ENCODE measurements at regions of chr5 and their contacts with region 1.

Region 1: GRCh38 chr5:55037046-55037771 is 13.2 kb downstream of the GZMK start:
- DNase-seq: peak; percentile 13 to 85 (median 56)
- ATAC-seq: peak; percentile 85
- H3K4me3 ChIP-seq: no peak overlapping the region
- H3K4me3 Mint-ChIP-seq: peak overlapping the region; percentile 50
- H3K27ac ChIP-seq: peak overlapping the region; percentile 16 to 72
- H3K27ac Mint-ChIP-seq: peak overlapping the region; percentile 93
- H3K4me1 ChIP-seq: peaks cover 22% of the 10 kb centered on the region
- H3K4me1 Mint-ChIP-seq: peaks cover 31% of the 10 kb centered on the region
- H3K27me3 ChIP-seq: no peaks in the 10 kb centered on the region
- H3K27me3 Mint-ChIP-seq: no peaks in the 10 kb centered on the region
- CTCF ChIP-seq: no peak

Region 2: DNA sequence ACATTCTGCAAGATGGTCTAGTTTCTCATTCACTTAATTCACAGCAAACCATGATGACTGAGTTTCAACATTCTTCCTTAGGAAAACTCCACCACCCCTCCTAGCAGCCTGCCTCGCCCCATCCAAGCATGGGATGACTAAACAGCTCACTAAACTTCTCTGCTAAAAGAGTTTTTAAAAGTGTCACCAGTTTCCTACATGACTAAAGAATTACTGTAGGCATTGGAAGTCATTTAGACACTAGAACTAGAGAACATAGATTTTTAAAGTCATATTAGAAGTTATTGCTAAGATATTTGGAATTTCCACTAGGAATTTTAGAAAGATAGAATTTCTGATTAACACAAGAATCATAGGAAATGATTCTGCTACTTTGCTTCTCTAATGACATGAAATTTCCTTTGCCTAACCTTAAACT is 46.4 kb before region 1 on chr5:
- CTCF ChIA-PET with region 1: interaction called, 4 read pairs
- POLR2A ChIA-PET with region 1: interaction called, 5 read pairs
- intact Hi-C with region 1: loop called in 1 of 2 experiments (anchors 5 kb)
- DNase-seq: no peak
- ATAC-seq: no peak
- H3K4me3 ChIP-seq: no peak overlapping the region
- H3K4me3 Mint-ChIP-seq: no peak overlapping the region
- H3K27ac ChIP-seq: no peak overlapping the region
- H3K27ac Mint-ChIP-seq: no peak overlapping the region
- H3K4me1 ChIP-seq: peaks cover 26% of the 10 kb centered on the region
- H3K4me1 Mint-ChIP-seq: peaks cover 50% of the 10 kb centered on the region
- H3K27me3 ChIP-seq: no peaks in the 10 kb centered on the region
- H3K27me3 Mint-ChIP-seq: no peaks in the 10 kb centered on the region
- CTCF ChIP-seq: no peak

Region 3: GRCh38 chr5:55021410-55021809 is 15.8 kb before region 1 on chr5:
- CTCF ChIA-PET with region 1: interaction called, 14 read pairs
- POLR2A ChIA-PET with region 1: interaction called, 24 read pairs
- intact Hi-C with region 1: no loop called
- DNase-seq: peak in 2 of 9 experiments; percentile 48 to 60
- ATAC-seq: peak; percentile 34
- H3K4me3 ChIP-seq: peak overlapping the region in 1 of 2 experiments; percentile 20
- H3K4me3 Mint-ChIP-seq: peak overlapping the region; percentile 35
- H3K27ac ChIP-seq: peak overlapping the region in 1 of 2 experiments; percentile 55
- H3K27ac Mint-ChIP-seq: peak overlapping the region; percentile 68
- H3K4me1 ChIP-seq: peaks cover 23% of the 10 kb centered on the region
- H3K4me1 Mint-ChIP-seq: peaks cover 47% of the 10 kb centered on the region
- H3K27me3 ChIP-seq: no peaks in the 10 kb centered on the region
- H3K27me3 Mint-ChIP-seq: no peaks in the 10 kb centered on the region
- CTCF ChIP-seq: no peak

Region 4: DNA sequence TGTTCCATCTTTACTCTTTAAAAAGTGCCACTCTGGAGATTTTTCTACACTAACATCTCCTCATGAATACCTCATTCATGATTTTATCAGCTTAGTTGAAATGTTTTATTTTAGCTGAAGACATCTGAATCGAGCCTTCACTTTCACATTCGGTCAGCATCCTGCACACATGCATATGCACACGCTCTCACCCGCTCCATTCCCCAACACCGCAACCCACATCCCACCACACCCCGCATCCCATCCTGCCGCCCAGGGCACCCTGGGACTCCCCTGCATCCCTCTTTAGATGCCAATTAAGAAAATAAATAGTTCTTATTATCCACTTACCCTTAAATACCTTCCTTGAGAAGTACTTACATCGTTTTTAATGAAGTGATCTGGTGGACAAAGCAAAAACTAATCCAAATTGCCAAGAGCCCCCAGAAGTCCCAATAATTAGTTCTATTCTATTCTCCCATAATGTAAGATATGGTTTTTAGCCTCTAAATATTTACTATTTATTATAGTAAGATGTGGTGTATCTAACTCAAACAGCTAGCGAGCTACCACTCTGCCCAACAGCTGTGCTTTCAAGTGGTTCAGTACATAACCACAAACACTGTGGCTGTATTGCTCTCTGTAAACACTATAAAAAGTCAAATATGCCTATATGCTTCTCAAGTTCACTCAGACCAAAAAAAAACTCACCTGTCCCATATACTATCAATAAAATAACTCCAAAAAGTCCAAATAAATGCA is 25.0 kb after region 1 on chr5:
- CTCF ChIA-PET with region 1: interaction called, 9 read pairs
- POLR2A ChIA-PET with region 1: interaction called, 9 read pairs
- intact Hi-C with region 1: loop called in 1 of 2 experiments (anchors 2 kb)
- DNase-seq: peak in 8 of 9 experiments; percentile 16 to 76 (median 49)
- ATAC-seq: peak; percentile 76
- H3K4me3 ChIP-seq: peak overlapping the region; percentile 30 to 44
- H3K4me3 Mint-ChIP-seq: peak overlapping the region; percentile 81
- H3K27ac ChIP-seq: peak overlapping the region; percentile 19 to 66
- H3K27ac Mint-ChIP-seq: peak overlapping the region; percentile 85
- H3K4me1 ChIP-seq: peaks cover 45% of the 10 kb centered on the region
- H3K4me1 Mint-ChIP-seq: peaks cover 57% of the 10 kb centered on the region
- H3K27me3 ChIP-seq: no peaks in the 10 kb centered on the region
- H3K27me3 Mint-ChIP-seq: no peaks in the 10 kb centered on the region
- CTCF ChIP-seq: no peak

Region 5: DNA sequence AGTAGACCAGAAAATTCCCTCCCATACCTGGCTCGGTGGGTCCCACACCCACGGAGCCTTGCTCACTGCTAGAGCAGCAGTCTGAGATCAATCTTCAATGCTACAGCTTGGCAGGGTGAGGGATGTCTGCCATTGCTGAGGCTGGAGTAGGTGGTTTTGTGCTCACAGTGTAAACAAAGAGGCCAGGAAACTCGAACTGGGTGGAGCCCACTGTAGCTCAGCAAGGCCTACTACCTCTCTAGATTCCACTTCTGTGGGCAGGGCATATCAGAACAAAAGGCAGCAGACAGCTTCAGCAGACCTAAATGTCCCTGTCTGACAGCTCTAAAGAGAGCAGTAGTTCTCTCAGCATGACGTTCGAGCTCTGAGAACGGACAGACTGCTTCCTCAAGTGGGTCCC is 59.7 kb after region 1 on chr5:
- CTCF ChIA-PET with region 1: interaction called, 9 read pairs
- POLR2A ChIA-PET with region 1: interaction called, 14 read pairs
- intact Hi-C with region 1: loop called in 1 of 2 experiments (anchors 2 kb)
- DNase-seq: peak; percentile 13 to 81 (median 60)
- ATAC-seq: peak; percentile 85
- H3K4me3 ChIP-seq: peak overlapping the region in 1 of 2 experiments; percentile 17
- H3K4me3 Mint-ChIP-seq: peak overlapping the region; percentile 57
- H3K27ac ChIP-seq: peak overlapping the region; percentile 48 to 79
- H3K27ac Mint-ChIP-seq: peak overlapping the region; percentile 92
- H3K4me1 ChIP-seq: peaks cover 61% of the 10 kb centered on the region
- H3K4me1 Mint-ChIP-seq: peaks cover 86% of the 10 kb centered on the region
- H3K27me3 ChIP-seq: no peaks in the 10 kb centered on the region
- H3K27me3 Mint-ChIP-seq: no peaks in the 10 kb centered on the region
- CTCF ChIP-seq: no peak

Region 6: DNA sequence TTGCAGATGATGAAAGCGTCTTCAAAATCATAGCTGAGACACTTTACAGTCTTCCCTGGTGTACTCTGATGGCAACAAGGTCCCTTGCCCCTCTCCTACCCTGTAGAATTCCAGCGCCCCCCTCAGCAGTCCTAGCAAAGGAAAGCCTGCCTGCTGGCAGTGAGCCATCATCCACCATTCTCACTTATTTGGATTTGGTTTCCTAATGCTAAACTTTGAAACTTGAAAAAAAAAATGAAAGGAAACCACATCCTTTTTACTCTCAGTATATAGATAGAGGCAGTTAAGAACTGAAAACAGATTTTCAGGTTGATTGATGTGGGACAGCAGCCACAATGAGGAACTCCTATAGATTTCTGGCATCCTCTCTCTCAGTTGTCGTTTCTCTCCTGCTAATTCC is 65.1 kb after region 1 on chr5 and contains the start of gene GZMA:
- CTCF ChIA-PET with region 1: interaction called, 9 read pairs
- POLR2A ChIA-PET with region 1: interaction called, 14 read pairs
- intact Hi-C with region 1: loop called in 1 of 2 experiments (anchors 2 kb)
- DNase-seq: peak in 7 of 9 experiments; percentile 12 to 83 (median 56)
- ATAC-seq: peak; percentile 72
- H3K4me3 ChIP-seq: peak within 1 kb of the TSS; percentile 41 to 78
- H3K4me3 Mint-ChIP-seq: peak within 1 kb of the TSS; percentile 80
- H3K27ac ChIP-seq: peak within 1 kb of the TSS; percentile 39 to 70
- H3K27ac Mint-ChIP-seq: peak within 1 kb of the TSS; percentile 86
- H3K4me1 ChIP-seq: peaks cover 55% of the 10 kb centered on the region
- H3K4me1 Mint-ChIP-seq: peaks cover 87% of the 10 kb centered on the region
- H3K27me3 ChIP-seq: no peaks in the 10 kb centered on the region
- H3K27me3 Mint-ChIP-seq: no peaks in the 10 kb centered on the region
- CTCF ChIP-seq: no peak
- total RNA-seq, gene GZMA: 13.4 to 13.6 TPM

Measured in CD8-positive, alpha-beta T cell (primary cell).